WTC11 (cell line): ENCODE measurements at regions of chrX and their contacts with region 1.

Region 1: GRCh38 chrX:84729809-84730208 is 227.6 kb upstream of the HDX start:
- DNase-seq: peak; percentile 26
- ATAC-seq: peak; percentile 97
- H3K4me3 Mint-ChIP-seq: no peak overlapping the region
- H3K27ac Mint-ChIP-seq: no peak overlapping the region
- H3K4me1 Mint-ChIP-seq: peaks cover 3% of the 10 kb centered on the region
- H3K27me3 Mint-ChIP-seq: no peaks in the 10 kb centered on the region
- CTCF ChIP-seq: peak; percentile 42

Region 2: DNA sequence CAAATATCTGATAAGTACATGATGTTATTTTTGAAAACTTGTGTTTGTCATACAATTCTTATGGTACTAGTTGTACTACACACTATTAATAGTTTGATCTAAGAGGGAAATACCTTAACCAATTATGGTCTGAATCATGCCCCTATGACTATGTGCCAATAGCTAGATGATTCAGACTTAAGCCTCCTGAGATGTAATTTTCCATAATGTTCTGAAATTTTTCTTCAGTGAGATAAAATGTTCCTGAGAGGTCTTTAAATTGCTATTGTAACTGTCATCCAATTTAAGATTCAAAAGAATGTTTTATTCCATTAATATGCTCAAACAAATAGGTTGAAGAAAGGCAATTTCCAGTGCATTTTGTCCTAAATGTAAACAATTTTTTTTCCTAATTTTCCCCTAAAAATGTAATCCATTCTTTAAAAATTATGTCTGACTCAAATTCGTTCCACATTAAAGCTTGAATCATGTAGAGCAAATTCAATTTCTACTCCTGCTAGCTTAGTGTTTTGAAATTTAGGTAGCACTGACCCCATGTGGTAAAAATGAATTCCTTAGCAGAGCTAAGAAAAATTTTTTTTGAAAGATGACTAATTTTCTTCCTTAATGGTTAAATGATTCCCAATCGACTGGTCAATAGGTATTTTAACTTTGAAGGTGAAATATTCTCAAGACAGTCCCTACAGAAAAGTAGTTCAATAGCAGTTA is 323.0 kb after region 1 on chrX:
- CTCF ChIA-PET with region 1: interaction called, 11 read pairs
- POLR2A ChIA-PET with region 1: no interaction called
- DNase-seq: no peak
- ATAC-seq: no peak
- H3K4me3 Mint-ChIP-seq: no peak overlapping the region
- H3K27ac Mint-ChIP-seq: no peak overlapping the region
- H3K4me1 Mint-ChIP-seq: no peaks in the 10 kb centered on the region
- H3K27me3 Mint-ChIP-seq: no peaks in the 10 kb centered on the region
- CTCF ChIP-seq: no peak